GM13976 (cell line): ENCODE measurements at regions of chr7 and their contacts with region 1.

Region 1: GRCh38 chr7:155344600-155345433 is 47.1 kb downstream of the INSIG1 start:
- DNase-seq: peak; percentile 91
- CTCF ChIP-seq: peak; percentile 84

Region 2: GRCh38 chr7:154231732-154232131 is 1113.1 kb before region 1 on chr7:
- in situ Hi-C with region 1: no loop called
- DNase-seq: no peak
- CTCF ChIP-seq: no peak

Region 3: DNA sequence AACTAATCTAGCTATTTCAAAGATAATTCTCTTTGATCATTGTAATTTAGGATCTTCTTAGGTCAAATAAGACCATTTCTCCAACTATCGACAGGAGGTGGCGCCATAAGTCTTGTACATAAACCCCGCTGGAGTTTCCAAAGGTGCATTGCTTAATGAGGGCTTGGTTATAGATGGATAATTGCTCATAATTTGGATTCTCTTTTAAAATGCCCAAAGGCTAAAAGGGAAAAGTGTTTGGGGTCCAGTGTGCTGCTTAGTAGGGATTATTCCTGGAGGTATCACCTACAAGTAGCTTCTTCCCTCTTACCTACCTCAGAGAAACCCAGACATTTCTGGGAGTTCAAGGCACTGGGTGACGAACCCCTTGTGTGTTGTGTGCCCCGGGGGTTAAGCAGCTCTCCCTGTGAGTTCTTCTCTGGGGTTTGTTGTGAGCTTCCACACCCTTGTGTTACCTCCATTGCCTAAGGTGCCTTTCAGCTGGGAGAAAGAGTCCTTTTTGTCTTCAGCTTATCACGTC is 417.1 kb before region 1 on chr7:
- in situ Hi-C with region 1: loop called (anchors 5 kb)
- DNase-seq: peak; percentile 53
- CTCF ChIP-seq: peak; percentile 54

Region 4: GRCh38 chr7:155090684-155091083 is 254.1 kb before region 1 on chr7:
- in situ Hi-C with region 1: no loop called
- DNase-seq: no peak
- CTCF ChIP-seq: no peak

Region 5: DNA sequence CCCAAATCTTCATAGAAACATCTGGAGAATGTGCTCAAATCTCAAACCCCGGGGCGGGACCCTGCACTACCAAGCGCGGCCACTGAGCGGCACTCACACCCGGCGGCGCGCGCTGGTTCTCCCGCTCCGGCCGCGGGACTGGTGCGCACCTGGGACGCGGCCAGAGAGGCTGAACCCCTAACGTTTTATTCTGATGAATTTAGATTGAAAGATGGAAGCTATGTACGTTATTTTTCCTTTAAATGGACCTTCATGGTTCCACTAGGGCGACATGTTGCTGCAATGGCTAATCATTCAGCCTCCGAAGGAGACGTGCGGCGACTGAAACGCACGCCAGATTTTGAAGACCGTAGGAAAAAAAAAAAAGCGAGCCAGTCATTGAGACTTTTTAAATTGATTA is 154.1 kb before region 1 on chr7:
- in situ Hi-C with region 1: loop called (anchors 10 kb)
- DNase-seq: peak; percentile 87
- CTCF ChIP-seq: peak; percentile 74